Endothelial cell of umbilical vein (primary cell): ENCODE measurements at regions of chr2 and their contacts with region 1.

Region 1: GRCh38 chr2:64653349-64654062 is at the start of gene SERTAD2:
- DNase-seq: peak; percentile 87
- H3K4me3 ChIP-seq: peak within 1 kb of the TSS; percentile 72 to 89 (median 83)
- H3K27ac ChIP-seq: peak within 1 kb of the TSS; percentile 91
- H3K4me1 ChIP-seq: peaks cover 21% of the 10 kb centered on the region
- H3K27me3 ChIP-seq: no peaks in the 10 kb centered on the region
- CTCF ChIP-seq: peak in 1 of 2 donors; percentile 14
- POLR2A ChIP-seq: peak; percentile 63
- total RNA-seq, gene SERTAD2: 11.2 and 12.0 TPM in 2 replicates

Region 2: DNA sequence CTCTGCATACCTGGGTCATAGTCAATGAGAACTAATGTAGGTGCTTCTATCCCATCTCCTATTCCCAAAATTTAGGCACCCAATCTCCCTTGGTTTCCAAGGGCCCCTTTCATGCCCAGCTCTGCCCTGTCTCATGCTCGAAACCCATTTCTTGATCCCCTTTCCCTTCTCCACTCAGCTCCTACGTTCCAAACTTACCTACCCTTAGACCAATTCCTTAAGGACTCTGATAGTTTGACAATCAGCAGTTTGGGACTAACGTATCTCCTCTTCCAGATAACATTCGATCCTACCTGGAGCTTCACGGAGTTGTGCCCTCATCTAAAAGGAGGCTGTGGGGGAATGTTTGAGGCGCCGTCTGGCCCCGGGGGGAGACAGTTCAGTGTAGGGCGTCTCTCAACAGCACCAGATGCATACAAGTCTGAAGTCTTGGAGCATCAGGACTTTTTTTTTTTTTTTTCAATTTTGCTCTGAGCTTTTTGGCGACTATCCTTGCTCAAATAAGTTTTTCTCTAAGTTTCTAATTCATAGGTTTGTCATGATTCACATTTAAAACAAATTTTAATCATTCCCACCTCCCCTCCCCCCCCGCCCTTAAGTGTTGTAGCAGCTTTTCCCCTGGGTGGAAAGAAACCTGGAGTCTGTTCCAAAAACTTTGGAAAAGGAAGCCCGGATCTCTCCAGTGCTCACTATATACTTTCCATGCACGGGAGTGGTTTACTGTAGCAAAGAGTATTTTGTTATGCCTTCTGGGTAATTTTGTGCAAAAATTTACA is 340.7 kb before region 1 on chr2:
- CTCF ChIA-PET with region 1: no interaction called
- POLR2A ChIA-PET with region 1: no interaction called
- dilution Hi-C with region 1: no loop called
- intact Hi-C with region 1: no loop called
- DNase-seq: no peak
- H3K4me3 ChIP-seq: no peak overlapping the region
- H3K27ac ChIP-seq: no peak overlapping the region
- H3K4me1 ChIP-seq: no peaks in the 10 kb centered on the region
- H3K27me3 ChIP-seq: peaks cover 0 to 7% of the 10 kb centered on the region in 2 experiments
- CTCF ChIP-seq: no peak
- POLR2A ChIP-seq: no peak

Region 3: GRCh38 chr2:64711252-64711800 is 57.8 kb after region 1 on chr2:
- CTCF ChIA-PET with region 1: interaction called, 46 read pairs
- POLR2A ChIA-PET with region 1: interaction called, 13 read pairs
- dilution Hi-C with region 1: no loop called
- intact Hi-C with region 1: loop called (anchors 1 kb)
- DNase-seq: peak; percentile 95
- H3K4me3 ChIP-seq: no peak overlapping the region
- H3K27ac ChIP-seq: peak overlapping the region; percentile 54
- H3K4me1 ChIP-seq: peaks cover 12% of the 10 kb centered on the region
- H3K27me3 ChIP-seq: no peaks in the 10 kb centered on the region
- CTCF ChIP-seq: peak in 1 of 2 donors; percentile 7
- POLR2A ChIP-seq: peak; percentile 27

Region 4: GRCh38 chr2:64767670-64768468 is 114.4 kb after region 1 on chr2:
- CTCF ChIA-PET with region 1: interaction called, 15 read pairs
- POLR2A ChIA-PET with region 1: interaction called, 6 read pairs
- dilution Hi-C with region 1: no loop called
- intact Hi-C with region 1: no loop called
- DNase-seq: peak; percentile 87
- H3K4me3 ChIP-seq: peak overlapping the region; percentile 57 to 80 (median 75)
- H3K27ac ChIP-seq: peak overlapping the region; percentile 87
- H3K4me1 ChIP-seq: peaks cover 12% of the 10 kb centered on the region
- H3K27me3 ChIP-seq: no peaks in the 10 kb centered on the region
- CTCF ChIP-seq: no peak
- POLR2A ChIP-seq: peak; percentile 76

Region 5: GRCh38 chr2:64859312-64860212 is 206.1 kb after region 1 on chr2:
- CTCF ChIA-PET with region 1: interaction called, 22 read pairs
- POLR2A ChIA-PET with region 1: interaction called, 9 read pairs
- dilution Hi-C with region 1: no loop called
- intact Hi-C with region 1: loop called (anchors 1 kb)
- DNase-seq: peak; percentile 76
- H3K4me3 ChIP-seq: peak overlapping the region in 2 of 3 experiments; percentile 24 to 34
- H3K27ac ChIP-seq: peak overlapping the region; percentile 66
- H3K4me1 ChIP-seq: peaks cover 17% of the 10 kb centered on the region
- H3K27me3 ChIP-seq: no peaks in the 10 kb centered on the region
- CTCF ChIP-seq: peak in 1 of 2 donors; percentile 22
- POLR2A ChIP-seq: no peak

Region 6: DNA sequence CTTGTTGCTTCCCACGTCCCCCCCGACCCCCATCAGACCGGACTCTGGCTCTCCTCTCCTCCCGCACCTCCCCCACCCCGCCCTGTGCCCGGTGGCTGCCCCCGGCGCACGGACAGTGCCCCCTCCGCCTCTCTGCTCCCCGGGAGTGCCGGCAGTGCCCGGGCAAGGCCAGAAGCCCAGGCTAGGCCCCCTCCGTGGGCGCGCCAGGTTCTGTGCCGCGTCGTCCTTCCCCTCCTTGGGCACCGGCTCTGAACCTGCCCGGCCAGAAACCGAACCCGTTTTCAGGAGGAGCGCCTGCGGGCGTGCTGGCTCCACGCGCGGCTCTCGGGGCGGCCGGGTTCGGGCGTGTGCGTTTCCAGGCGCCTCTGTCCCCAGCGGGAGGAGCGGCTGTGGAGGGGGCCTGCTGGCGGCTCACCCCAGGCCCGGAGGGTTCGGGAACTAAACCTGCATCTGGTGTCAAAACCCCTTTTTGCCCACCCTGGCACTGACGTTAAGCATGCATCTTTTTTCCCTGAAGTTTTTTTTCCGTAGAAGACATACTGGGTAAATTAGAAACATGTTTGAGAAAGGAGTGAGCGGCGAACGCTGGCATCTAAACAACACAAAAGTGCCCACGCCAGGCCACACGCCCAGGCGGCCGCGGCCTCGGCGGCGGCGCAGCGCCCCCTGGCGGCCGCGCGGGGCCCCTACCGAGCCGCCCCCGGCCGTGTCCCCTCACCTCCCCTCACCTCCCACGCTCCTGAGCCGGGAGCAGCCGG is 211.7 kb after region 1 on chr2:
- CTCF ChIA-PET with region 1: interaction called, 22 read pairs
- POLR2A ChIA-PET with region 1: interaction called, 6 read pairs
- dilution Hi-C with region 1: no loop called
- intact Hi-C with region 1: no loop called
- DNase-seq: peak; percentile 71
- H3K4me3 ChIP-seq: peak overlapping the region; percentile 42 to 46 (median 44)
- H3K27ac ChIP-seq: peak overlapping the region; percentile 66
- H3K4me1 ChIP-seq: peaks cover 6% of the 10 kb centered on the region
- H3K27me3 ChIP-seq: no peaks in the 10 kb centered on the region
- CTCF ChIP-seq: peak; percentile 43 to 94
- POLR2A ChIP-seq: no peak